Sigmoid colon (tissue), 7 donors: ENCODE measurements at regions of chr16 and their contacts with region 1.

Region 1: DNA sequence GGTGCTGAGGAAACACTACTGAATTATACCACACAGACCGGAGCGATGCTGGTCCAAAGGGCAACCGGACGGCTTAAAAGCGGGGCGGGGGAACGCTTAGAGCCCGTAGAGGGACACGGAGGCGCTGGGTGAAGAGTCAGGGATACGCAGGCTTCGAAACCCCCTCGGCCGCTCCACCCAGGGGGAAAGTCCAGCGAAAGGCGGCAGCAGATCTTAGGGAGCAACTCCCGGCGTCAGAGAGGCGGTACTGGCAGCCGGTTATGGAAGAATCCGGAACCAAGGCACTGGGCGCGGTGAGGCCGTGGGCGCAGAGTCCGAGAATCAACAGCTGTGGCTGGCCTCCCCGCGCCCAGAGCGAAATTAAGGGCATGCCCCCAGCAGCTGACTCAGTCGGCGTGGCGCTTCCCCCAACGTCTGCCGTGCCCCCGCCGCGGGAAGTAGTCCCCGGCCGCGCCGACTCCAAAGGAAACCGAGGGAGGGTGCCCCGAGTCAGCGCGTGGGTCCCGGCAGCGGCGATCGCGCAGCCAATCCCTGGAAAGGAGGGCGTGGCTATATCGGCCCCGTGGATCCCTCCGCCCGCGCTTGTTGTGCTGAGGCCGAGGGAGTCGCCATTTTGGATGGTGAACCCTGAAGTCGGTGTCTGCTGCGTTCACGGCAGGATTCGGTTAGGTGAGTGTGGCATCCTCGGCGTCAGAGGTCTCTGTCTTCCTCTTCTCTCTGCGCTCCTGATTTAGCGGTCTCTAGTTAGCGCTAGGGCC is at the start of gene IST1:
- DNase-seq: peak; percentile 99
- H3K4me3 ChIP-seq: peak within 1 kb of the TSS; percentile 79 to 95 (median 90)
- H3K27ac ChIP-seq: peak within 1 kb of the TSS; percentile 91 to 99 (median 96)
- H3K4me1 ChIP-seq: peaks cover 0 to 47% (median 42%) of the 10 kb centered on the region in 4 donors
- H3K27me3 ChIP-seq: no peaks in the 10 kb centered on the region
- CTCF ChIP-seq: no peak
- EP300 ChIP-seq: peak in 1 of 4 donors; percentile 52
- POLR2A ChIP-seq: peak; percentile 88 to 89
- total RNA-seq, gene IST1: 117 to 176 (median 170) TPM

Region 2: DNA sequence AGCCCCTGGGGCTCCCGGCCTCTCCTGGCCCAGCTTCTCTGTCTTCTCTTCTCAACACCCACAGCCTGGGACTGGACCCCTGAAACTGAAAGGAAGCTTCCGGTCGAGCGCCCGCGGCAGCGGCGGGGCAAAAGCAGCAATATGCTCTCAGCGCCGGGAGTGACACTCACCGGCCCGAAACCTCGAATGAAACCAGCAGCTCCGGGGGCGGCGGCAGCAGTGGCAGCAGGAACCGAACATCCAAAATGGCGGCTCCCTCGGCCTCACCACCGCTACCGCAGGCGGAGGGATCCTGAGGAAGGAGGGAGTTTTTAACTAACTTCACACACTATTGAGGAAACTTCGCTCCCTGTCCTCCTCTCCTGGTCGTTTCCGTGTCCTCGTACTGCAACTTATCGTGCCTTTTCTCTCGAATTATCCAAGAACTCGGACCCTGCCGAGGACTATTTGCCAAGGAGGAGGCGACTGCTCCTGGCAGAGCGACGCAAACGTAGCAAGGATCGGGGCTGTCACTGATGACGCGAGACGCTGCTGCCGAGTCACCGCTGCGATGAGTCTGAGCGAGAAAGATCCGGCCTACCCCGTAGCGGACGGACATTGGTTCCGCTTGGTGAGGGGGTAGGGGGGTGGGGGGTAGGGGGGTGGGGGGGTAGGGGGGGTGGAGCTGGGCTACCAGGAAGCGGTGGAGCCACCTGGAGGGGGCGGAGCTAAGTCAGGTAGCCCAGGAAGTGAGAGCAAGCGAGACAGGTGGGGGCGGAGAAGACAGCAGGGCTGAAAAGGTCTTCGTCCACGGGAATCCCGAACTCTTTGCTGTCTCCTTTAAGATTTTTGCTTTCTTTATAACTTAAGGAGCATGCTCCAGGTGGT is 86.3 kb before region 1 on chr16 and contains the start of gene AP1G1:
- intact Hi-C with region 1: loop called (anchors 2 kb)
- DNase-seq: peak; percentile 98
- H3K4me3 ChIP-seq: peak within 1 kb of the TSS; percentile 77 to 98 (median 79)
- H3K27ac ChIP-seq: peak within 1 kb of the TSS; percentile 94 to 99 (median 97)
- H3K4me1 ChIP-seq: peaks cover 0 to 38% (median 31%) of the 10 kb centered on the region in 4 donors
- H3K27me3 ChIP-seq: no peaks in the 10 kb centered on the region
- CTCF ChIP-seq: no peak
- EP300 ChIP-seq: peak in 1 of 4 donors; percentile 65
- POLR2A ChIP-seq: peak; percentile 50 to 57
- total RNA-seq, gene AP1G1: 34.9 to 57.3 (median 51.1) TPM

Region 3: DNA sequence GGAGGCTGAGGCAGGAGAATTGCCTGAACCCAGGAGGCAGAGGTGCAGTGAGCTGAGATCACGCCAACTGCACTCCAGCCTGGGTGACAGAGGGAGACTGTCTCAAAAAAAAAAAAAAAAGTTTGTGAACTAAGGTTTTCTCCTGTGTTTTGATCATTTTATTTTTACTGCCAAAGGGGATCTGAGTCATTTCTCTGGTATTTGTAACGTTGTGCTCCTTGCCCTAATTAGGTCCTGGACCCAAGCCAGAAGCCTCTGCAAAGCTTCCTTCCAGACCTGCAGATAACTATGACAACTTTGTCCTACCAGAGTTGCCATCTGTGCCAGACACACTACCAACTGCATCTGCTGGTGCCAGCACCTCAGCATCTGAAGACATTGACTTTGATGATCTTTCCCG is 32.3 kb after region 1 on chr16:
- intact Hi-C with region 1: loop called (anchors 2 kb)
- DNase-seq: peak; percentile 86
- H3K4me3 ChIP-seq: no peak overlapping the region
- H3K27ac ChIP-seq: peak overlapping the region; percentile 69 to 87 (median 74)
- H3K4me1 ChIP-seq: peaks cover 0 to 54% (median 44%) of the 10 kb centered on the region in 4 donors
- H3K27me3 ChIP-seq: no peaks in the 10 kb centered on the region
- CTCF ChIP-seq: no peak
- EP300 ChIP-seq: no peak
- POLR2A ChIP-seq: no peak

Region 4: DNA sequence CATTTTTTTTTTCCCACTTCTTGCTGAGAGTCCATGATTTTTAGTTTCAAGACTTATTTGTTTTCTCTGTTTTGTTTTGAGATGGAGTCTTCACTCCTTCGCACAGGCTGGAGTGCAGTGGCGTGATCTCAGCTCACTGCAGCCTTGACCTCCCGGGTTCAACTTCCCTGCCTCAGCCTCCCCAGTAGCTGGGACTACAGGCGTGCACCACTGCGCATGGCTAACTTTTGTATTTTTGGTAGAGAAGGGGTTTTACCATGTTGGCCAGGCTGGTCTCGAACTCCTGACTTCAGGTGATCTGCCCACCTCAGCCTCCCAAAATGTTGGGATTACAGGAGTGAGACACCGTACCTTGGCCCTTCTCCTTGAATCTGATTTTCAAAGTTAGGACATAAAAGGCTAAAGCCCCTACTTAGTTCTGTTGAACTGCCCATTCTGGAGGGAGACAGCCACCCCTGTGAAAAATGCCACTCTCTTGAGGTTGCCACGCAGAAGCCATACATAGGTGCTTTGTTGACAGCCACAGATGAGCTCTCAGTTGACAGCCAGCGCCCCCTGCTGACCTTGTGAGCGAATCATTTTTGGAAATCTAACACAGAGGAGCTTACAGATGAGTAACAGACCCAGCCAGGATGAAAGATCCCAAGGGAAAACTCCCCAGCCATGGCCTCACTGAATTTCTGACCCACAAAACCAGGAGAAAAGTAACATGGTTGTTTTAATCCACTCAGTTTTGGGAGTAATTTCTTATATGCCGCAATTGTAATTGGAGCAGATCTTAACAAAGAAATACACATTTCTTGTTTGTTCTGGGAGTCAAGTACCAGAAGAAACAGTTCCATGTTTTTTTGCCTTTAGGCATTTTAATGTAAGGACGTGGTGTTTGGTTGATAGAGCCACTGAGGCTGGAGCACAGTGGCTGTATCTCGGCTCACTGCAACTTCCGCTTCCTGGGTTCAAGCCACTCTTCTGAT is 66.3 kb after region 1 on chr16:
- intact Hi-C with region 1: loop called (anchors 5 kb)
- DNase-seq: peak; percentile 92
- H3K4me3 ChIP-seq: no peak overlapping the region
- H3K27ac ChIP-seq: no peak overlapping the region
- H3K4me1 ChIP-seq: no peaks in the 10 kb centered on the region
- H3K27me3 ChIP-seq: no peaks in the 10 kb centered on the region
- CTCF ChIP-seq: peak; percentile 69 to 75 (median 72)
- EP300 ChIP-seq: no peak
- POLR2A ChIP-seq: no peak

Region 5: GRCh38 chr16:72008424-72009216 is 113.5 kb after region 1 on chr16 and contains the start of gene DHODH:
- intact Hi-C with region 1: loop called (anchors 5 kb)
- DNase-seq: peak; percentile 99
- H3K4me3 ChIP-seq: peak within 1 kb of the TSS; percentile 57 to 83 (median 70)
- H3K27ac ChIP-seq: peak within 1 kb of the TSS; percentile 52 to 74 (median 64)
- H3K4me1 ChIP-seq: peaks cover 0 to 4% (median 2%) of the 10 kb centered on the region in 4 donors
- H3K27me3 ChIP-seq: no peaks in the 10 kb centered on the region
- CTCF ChIP-seq: no peak
- EP300 ChIP-seq: peak in 1 of 4 donors; percentile 30
- POLR2A ChIP-seq: no peak
- total RNA-seq, gene DHODH: 3.2 to 7.4 (median 4.0) TPM

Region 6: DNA sequence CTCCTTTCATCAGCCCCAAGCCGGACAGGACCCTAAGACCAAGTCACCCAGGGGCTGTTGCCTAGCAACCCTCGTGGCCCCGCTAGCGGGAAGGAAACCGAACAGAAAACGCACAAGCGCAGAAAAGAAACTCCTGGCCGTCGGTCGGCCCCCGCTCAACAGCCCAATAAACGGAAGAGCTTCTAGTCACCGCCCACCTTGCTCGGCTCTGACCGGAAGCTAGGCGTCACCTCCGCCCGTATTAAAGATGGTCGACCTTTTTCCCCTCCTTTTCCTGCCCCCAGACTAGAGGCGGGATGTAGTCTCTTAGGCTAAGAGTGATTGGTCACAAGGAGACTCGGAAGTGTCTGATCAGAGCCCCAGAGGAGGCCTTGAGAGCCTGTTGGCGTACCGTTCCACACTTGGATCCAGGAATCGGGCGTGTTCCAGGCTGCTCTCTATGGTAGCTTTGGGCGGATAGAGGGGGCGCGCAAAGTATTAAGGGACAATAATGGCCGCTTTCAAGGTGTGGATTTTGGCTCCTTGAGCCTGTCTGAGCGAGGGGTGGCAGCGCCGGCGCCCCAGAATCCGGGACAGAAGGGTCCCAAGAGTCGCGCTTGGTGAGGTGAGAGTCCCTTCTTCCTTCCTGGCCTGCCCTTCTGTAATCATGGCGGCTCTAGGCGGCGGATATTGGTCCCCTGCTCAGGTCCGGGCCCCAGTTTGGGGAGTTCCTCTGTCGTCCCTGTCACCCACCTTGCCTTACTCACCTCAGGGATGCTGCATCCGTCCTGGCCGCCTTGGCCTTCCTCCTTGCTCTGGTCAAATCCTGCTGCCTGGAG is 198.6 kb after region 1 on chr16 and contains the starts of genes DHX38 and TXNL4B:
- intact Hi-C with region 1: loop called (anchors 5 kb)
- DNase-seq: peak; percentile 97
- H3K4me3 ChIP-seq: peak within 1 kb of the TSS; percentile 73 to 94 (median 83)
- H3K27ac ChIP-seq: peak within 1 kb of the TSS; percentile 91 to 95 (median 92)
- H3K4me1 ChIP-seq: peaks cover 0 to 40% (median 34%) of the 10 kb centered on the region in 4 donors
- H3K27me3 ChIP-seq: no peaks in the 10 kb centered on the region
- CTCF ChIP-seq: no peak
- EP300 ChIP-seq: no peak
- POLR2A ChIP-seq: peak; percentile 74 to 80
- total RNA-seq, gene DHX38: 24.8 to 54.0 (median 36.7) TPM
- total RNA-seq, gene TXNL4B: 7.8 to 11.8 (median 8.1) TPM